T-cell (primary cell): ENCODE measurements at regions of chr13 and their contacts with region 1.

Region 1: DNA sequence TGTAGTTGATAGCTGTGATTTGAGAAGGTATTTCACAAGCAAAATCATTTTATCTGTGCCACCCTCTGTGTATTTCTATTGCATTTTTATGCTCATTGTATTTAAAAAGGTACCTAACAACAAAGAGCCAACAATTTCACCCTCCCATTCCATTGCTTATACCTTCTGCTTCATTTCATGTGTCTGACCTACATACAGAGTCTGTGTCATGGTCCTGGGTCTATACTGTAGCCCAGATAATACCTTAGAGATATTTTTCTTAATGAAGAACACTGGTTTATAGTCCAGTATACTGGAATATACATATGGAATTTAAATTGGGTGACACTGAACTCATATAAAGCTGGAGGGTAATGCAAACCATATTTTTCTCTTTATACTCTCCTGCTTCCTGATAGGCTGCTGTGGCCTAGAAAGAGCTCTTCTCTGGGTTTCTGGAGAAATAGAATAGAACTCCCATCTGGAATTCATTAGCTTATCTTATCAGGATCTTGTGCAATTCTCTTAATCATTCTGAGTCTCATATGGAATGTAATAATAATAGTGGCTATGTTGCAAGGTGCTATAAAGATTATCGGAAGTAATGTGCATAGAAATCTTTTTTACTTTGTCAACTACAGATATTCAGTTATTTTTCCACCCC is 31.8 kb upstream of the SPART start:
- DNase-seq: no peak
- ATAC-seq: no peak
- H3K4me3 ChIP-seq: no peak overlapping the region
- H3K4me3 Mint-ChIP-seq: no peak overlapping the region
- H3K27ac ChIP-seq: no peak overlapping the region
- H3K27ac Mint-ChIP-seq: no peak overlapping the region
- H3K4me1 ChIP-seq: no peaks in the 10 kb centered on the region
- H3K4me1 Mint-ChIP-seq: no peaks in the 10 kb centered on the region
- H3K27me3 ChIP-seq: peaks cover 0 to 3% of the 10 kb centered on the region in 2 experiments
- H3K27me3 Mint-ChIP-seq: peaks cover under 1 to 3% of the 10 kb centered on the region in 2 donors

Region 2: DNA sequence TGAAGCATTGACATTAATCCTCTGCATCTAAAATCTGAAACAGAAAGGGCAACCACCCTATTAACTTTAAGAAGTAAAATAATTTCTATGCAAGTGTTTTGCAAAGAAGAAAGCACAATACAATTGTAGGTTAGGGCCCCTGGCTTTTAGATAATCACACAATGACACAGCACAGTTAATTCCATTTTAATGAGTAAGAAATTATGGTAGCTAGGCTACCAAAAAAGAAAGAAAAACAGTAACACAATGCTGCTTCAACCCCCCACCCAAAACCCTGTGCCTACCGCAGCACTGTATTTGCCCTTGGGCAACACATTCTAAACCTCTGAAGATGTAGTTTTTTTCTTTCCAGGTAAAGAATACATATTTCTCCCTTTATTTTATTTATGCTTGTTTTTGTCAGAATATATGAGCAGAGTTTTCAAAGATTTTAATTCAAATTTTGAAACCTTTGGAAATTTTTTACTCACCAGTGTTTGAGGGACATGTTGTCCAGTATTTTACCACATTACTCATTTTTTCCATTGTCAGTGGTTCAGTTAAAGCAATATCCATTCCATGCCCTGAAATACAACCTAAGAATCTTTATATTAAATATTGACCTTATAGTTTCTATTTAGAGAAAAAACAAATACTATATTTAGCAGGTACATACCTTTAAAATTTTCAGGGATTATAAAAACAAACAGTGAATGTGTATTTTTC is 184.6 kb before region 1 on chr13:
- CTCF ChIA-PET with region 1: no interaction called
- POLR2A ChIA-PET with region 1: interaction called in 1 of 2 experiments, 10 read pairs
- DNase-seq: no peak
- ATAC-seq: no peak
- H3K4me3 ChIP-seq: no peak overlapping the region
- H3K4me3 Mint-ChIP-seq: no peak overlapping the region
- H3K27ac ChIP-seq: no peak overlapping the region
- H3K27ac Mint-ChIP-seq: no peak overlapping the region
- H3K4me1 ChIP-seq: no peaks in the 10 kb centered on the region
- H3K4me1 Mint-ChIP-seq: no peaks in the 10 kb centered on the region
- H3K27me3 ChIP-seq: no peaks in the 10 kb centered on the region
- H3K27me3 Mint-ChIP-seq: peaks cover 0 to 2% of the 10 kb centered on the region in 2 donors

Region 3: DNA sequence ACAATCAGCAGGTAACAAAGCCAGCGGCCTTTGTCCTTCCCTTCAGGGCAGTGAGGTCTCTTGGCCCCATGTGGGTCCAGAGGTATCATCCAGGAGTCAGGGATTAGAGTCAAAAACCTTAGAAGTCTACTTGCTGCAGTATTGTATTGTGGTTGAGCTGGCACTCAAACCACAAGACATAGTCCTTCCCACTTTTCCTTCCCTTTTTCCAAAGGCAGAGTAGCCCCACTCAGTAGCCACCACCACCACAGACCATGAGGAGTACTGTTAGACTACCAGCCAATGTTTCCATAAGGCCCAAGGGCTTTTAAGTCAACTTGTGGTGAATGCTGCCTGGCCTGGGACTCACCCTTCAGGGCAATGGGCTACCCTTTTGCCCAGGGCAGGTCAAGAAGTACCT is 27.2 kb after region 1 on chr13:
- CTCF ChIA-PET with region 1: no interaction called
- POLR2A ChIA-PET with region 1: no interaction called
- DNase-seq: no peak
- ATAC-seq: no peak
- H3K4me3 ChIP-seq: no peak overlapping the region
- H3K4me3 Mint-ChIP-seq: no peak overlapping the region
- H3K27ac ChIP-seq: no peak overlapping the region
- H3K27ac Mint-ChIP-seq: no peak overlapping the region
- H3K4me1 ChIP-seq: no peaks in the 10 kb centered on the region
- H3K4me1 Mint-ChIP-seq: no peaks in the 10 kb centered on the region
- H3K27me3 ChIP-seq: peaks cover 0 to 5% of the 10 kb centered on the region in 2 experiments
- H3K27me3 Mint-ChIP-seq: peaks cover 21 to 34% of the 10 kb centered on the region in 2 donors

Region 4: GRCh38 chr13:36475468-36475867 is 97.5 kb after region 1 on chr13:
- CTCF ChIA-PET with region 1: no interaction called
- POLR2A ChIA-PET with region 1: no interaction called
- DNase-seq: no peak
- ATAC-seq: no peak
- H3K4me3 ChIP-seq: no peak overlapping the region
- H3K4me3 Mint-ChIP-seq: no peak overlapping the region
- H3K27ac ChIP-seq: no peak overlapping the region
- H3K27ac Mint-ChIP-seq: no peak overlapping the region
- H3K4me1 ChIP-seq: no peaks in the 10 kb centered on the region
- H3K4me1 Mint-ChIP-seq: no peaks in the 10 kb centered on the region
- H3K27me3 ChIP-seq: no peaks in the 10 kb centered on the region
- H3K27me3 Mint-ChIP-seq: peaks cover 2 to 5% of the 10 kb centered on the region in 2 donors